SK-N-SH (cell line): ENCODE measurements at regions of chr19 and their contacts with region 1.

Region 1: GRCh38 chr19:13195678-13196077 is 45.5 kb downstream of the IER2 start:
- DNase-seq: no peak
- H3K4me3 ChIP-seq: no peak overlapping the region; a peak in 1 of 4 replicates
- H3K27ac ChIP-seq: no peak overlapping the region
- H3K4me1 ChIP-seq: no peaks in the 10 kb centered on the region
- H3K27me3 ChIP-seq: no peaks in the 10 kb centered on the region
- CTCF ChIP-seq: no peak
- EP300 ChIP-seq: no peak
- RAD21 ChIP-seq: no peak

Region 2: GRCh38 chr19:13181747-13182388 is 13.8 kb before region 1 on chr19:
- CTCF ChIA-PET with region 1: interaction called, 11 read pairs
- POLR2A ChIA-PET with region 1: no interaction called
- DNase-seq: peak; percentile 60
- H3K4me3 ChIP-seq: no peak overlapping the region
- H3K27ac ChIP-seq: peak overlapping the region; percentile 17 to 40; a peak in 3 of 4 replicates
- H3K4me1 ChIP-seq: peaks cover 8% of the 10 kb centered on the region in 2 experiments; a peak in 2 of 4 replicates
- H3K27me3 ChIP-seq: no peaks in the 10 kb centered on the region
- CTCF ChIP-seq: no peak
- EP300 ChIP-seq: no peak
- RAD21 ChIP-seq: peak; percentile 25; the same call in 1 of the 2 replicates

Region 3: DNA sequence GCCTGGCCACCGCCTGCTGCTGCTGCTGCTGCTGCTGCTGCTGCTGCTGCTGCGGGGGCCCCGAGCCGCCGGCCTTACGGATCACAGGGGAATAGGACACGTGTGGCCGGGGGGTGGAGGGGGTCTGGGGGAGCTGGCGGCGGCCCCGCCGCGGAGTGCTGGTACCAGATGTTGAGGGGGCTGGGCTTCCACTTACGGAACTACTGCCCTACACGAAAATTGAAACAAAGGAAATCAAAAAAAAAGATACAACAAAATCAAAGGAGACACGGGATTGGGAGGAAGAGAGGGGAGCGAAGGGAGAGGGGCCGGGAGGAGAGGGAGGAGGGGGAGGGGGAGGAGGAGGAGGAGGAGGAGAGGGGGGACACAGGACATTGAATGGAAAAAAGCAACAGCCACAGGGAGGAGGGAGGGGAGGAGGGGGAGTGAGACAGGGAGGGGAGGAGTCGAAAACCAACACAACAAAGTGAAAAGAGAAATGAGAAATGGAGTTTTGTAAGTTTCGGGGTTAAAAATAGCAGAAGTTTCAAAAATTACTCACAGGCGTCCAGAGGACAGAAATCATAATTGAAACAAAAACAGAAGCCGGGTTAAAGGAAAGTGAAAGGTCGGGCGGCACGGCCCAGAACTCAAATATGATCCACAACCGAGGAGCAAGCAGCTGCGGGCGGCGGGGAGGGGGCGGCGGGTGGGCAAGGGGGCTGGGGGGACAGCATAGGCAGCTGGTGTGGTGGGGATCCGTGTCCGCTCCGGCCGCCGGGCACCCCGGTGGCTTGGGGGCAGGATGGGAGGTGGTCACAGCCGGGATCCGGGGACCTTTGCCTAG is 12.4 kb after region 1 on chr19:
- CTCF ChIA-PET with region 1: interaction called, 10 read pairs
- POLR2A ChIA-PET with region 1: no interaction called
- DNase-seq: no peak
- H3K4me3 ChIP-seq: no peak overlapping the region
- H3K27ac ChIP-seq: no peak overlapping the region
- H3K4me1 ChIP-seq: no peaks in the 10 kb centered on the region
- H3K27me3 ChIP-seq: no peaks in the 10 kb centered on the region
- CTCF ChIP-seq: no peak
- EP300 ChIP-seq: no peak
- RAD21 ChIP-seq: no peak

Region 4: GRCh38 chr19:13234518-13234917 is 38.8 kb after region 1 on chr19:
- CTCF ChIA-PET with region 1: no interaction called
- POLR2A ChIA-PET with region 1: no interaction called
- DNase-seq: peak; percentile 81
- H3K4me3 ChIP-seq: no peak overlapping the region; a peak in 1 of 4 replicates
- H3K27ac ChIP-seq: no peak overlapping the region
- H3K4me1 ChIP-seq: no peaks in the 10 kb centered on the region
- H3K27me3 ChIP-seq: peaks cover 40% of the 10 kb centered on the region; the same call in 1 of the 2 replicates
- CTCF ChIP-seq: peak; percentile 57
- EP300 ChIP-seq: no peak
- RAD21 ChIP-seq: peak; percentile 50

Region 5: DNA sequence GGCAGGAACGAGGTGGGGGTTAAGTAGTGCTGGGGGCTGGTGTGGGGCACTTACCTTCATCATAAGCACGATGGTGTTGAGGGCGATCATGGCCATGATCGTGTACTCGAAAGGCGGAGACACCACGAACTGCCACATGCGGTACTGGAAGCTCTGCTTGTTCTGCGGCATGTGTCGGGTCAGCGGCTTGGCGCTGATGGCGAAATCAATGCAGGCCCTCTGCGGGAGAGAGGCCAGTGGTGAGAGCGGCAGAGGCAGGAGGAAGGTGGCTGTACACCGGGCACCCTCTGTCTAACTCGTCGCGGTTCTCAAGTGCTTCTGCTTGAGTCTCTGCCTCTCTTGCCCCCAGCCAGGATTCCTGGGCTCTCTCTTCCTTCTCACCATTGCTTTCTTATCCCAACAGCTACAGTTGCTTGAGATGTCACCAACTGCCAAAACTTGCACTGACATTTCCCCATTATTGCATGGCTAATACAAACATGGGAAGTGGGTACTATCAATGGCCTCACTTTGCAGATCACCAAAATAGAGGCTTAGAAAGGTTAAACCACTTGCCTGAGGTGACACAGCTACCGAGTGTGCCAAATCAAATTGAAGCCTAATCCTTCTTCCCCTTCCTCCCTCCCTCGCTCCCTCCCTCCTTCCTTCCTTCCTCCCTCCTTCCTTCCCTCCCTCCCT is 59.5 kb after region 1 on chr19:
- CTCF ChIA-PET with region 1: no interaction called
- POLR2A ChIA-PET with region 1: no interaction called
- DNase-seq: no peak
- H3K4me3 ChIP-seq: no peak overlapping the region
- H3K27ac ChIP-seq: no peak overlapping the region
- H3K4me1 ChIP-seq: no peaks in the 10 kb centered on the region; a peak in 1 of 4 replicates
- H3K27me3 ChIP-seq: peaks cover 77% of the 10 kb centered on the region
- CTCF ChIP-seq: no peak
- EP300 ChIP-seq: no peak
- RAD21 ChIP-seq: no peak

Region 6: DNA sequence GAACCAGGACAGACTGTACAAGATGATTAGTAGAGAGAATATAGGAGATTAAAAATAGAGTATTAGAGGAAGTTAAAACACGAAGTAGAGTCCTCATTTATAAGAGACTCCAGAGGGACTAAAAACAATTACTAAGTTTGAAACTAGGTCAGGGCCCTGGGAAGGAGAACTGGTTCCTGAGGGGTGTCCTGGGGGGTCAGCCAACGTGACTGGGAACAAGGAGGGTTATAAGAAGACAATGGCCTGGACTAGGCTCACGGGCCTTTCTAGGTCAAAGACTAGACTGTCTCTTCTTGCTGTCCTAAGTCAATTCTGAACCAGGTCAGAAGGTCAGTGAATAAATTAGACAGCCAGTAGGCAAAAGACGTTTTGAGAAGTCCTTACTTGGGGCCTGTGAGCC is 119.8 kb after region 1 on chr19:
- CTCF ChIA-PET with region 1: no interaction called
- POLR2A ChIA-PET with region 1: no interaction called
- DNase-seq: no peak
- H3K4me3 ChIP-seq: no peak overlapping the region
- H3K27ac ChIP-seq: no peak overlapping the region
- H3K4me1 ChIP-seq: no peaks in the 10 kb centered on the region
- H3K27me3 ChIP-seq: peaks cover 26% of the 10 kb centered on the region; the same call in 1 of the 2 replicates
- CTCF ChIP-seq: no peak
- EP300 ChIP-seq: no peak
- RAD21 ChIP-seq: no peak

Region 7: DNA sequence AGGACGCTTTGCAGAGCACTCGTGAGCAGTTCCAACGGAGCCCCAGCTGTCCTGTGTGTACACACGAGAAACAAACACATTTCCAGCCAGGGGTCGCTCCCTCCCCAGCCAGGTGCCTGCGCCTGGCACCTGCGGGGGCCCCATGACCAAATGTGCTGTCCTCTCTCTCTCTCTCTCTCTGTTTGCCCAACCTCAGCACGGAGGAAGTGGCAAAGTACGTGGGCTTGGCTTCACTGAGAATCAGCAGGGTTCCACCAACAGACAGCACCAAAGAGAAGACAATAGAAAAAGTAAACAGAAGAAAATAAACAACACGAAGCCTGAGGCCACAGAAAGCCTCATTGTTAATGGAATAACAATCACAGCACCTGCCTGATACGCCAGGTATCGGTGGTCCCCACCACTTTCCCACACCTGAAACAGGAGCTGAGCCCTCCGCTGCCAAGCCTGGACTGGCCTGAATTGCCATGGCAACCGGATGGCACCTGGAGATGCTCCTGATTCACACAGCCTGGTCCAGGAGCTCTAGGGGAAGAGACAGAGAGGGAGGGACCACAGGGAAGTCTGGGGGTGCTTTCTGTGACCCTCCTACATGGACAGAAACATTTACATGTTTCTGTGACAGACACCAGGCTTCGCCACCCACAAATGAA is 414.5 kb after region 1 on chr19:
- CTCF ChIA-PET with region 1: no interaction called
- POLR2A ChIA-PET with region 1: no interaction called
- DNase-seq: no peak
- H3K4me3 ChIP-seq: no peak overlapping the region
- H3K27ac ChIP-seq: no peak overlapping the region
- H3K4me1 ChIP-seq: peaks cover 0 to under 1% of the 10 kb centered on the region in 2 experiments; a peak in 1 of 4 replicates
- H3K27me3 ChIP-seq: peaks cover 31% of the 10 kb centered on the region
- CTCF ChIP-seq: no peak
- EP300 ChIP-seq: no peak
- RAD21 ChIP-seq: no peak